H1 (cell line): ENCODE measurements at regions of chr3 and their contacts with region 1.

Region 1: GRCh38 chr3:196023947-196024346 is 57.9 kb downstream of the TFRC start:
- DNase-seq: no peak
- H3K4me3 ChIP-seq: no peak overlapping the region
- H3K27ac ChIP-seq: no peak overlapping the region
- H3K4me1 ChIP-seq: no peaks in the 10 kb centered on the region
- H3K27me3 ChIP-seq: no peaks in the 10 kb centered on the region
- CTCF ChIP-seq: no peak
- EP300 ChIP-seq: no peak
- POLR2A ChIP-seq: no peak
- RAD21 ChIP-seq: no peak

Region 2: DNA sequence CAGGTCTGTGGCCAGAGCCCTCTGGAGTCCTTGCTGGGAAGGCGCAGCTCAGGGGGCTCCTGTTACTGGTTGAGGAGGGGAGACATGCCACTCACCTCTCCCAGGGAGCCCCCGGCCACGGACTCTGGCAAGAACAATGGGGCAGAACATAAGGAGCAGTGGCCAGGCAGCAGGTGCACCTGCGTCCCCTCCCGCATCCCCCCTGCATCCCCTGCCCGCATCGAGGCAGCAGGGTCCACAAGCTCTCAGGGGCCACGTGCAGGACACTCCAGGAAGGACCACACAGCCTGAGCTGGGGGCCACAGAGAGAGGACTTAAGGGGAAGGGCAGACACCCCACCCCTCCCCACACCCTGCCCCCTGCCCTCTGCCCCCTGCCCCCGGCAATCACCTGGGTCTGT is 15.0 kb before region 1 on chr3:
- CTCF ChIA-PET with region 1: interaction called, 10 read pairs
- POLR2A ChIA-PET with region 1: no interaction called
- DNase-seq: no peak
- H3K4me3 ChIP-seq: no peak overlapping the region
- H3K27ac ChIP-seq: no peak overlapping the region
- H3K4me1 ChIP-seq: no peaks in the 10 kb centered on the region
- H3K27me3 ChIP-seq: no peaks in the 10 kb centered on the region
- CTCF ChIP-seq: no peak
- EP300 ChIP-seq: no peak
- POLR2A ChIP-seq: no peak
- RAD21 ChIP-seq: no peak

Region 3: DNA sequence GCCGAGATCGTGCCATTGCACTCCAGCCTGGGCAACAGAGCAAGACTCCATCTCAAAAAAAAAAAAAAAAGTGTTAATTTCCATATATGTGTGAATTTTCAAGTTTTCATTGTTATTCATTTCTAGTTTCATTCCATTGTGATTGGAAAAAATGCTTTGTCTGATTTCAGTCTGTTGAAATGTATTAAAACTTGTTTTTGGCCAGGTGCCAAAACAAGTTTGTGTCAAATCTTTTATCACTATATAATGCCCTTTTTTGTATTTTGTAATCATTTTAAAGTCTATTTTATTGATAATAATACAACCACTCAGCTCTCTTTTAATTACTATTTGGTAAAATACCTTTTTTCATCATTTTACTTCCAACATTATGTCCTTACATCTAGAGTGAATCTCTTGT is 15.4 kb after region 1 on chr3:
- CTCF ChIA-PET with region 1: interaction called, 13 read pairs
- POLR2A ChIA-PET with region 1: no interaction called
- DNase-seq: no peak
- H3K4me3 ChIP-seq: no peak overlapping the region
- H3K27ac ChIP-seq: no peak overlapping the region
- H3K4me1 ChIP-seq: no peaks in the 10 kb centered on the region
- H3K27me3 ChIP-seq: no peaks in the 10 kb centered on the region
- CTCF ChIP-seq: no peak
- EP300 ChIP-seq: no peak
- POLR2A ChIP-seq: no peak
- RAD21 ChIP-seq: no peak